ENCODE measurements at regions of chr12 and their contacts with region 1.

Region 1: DNA sequence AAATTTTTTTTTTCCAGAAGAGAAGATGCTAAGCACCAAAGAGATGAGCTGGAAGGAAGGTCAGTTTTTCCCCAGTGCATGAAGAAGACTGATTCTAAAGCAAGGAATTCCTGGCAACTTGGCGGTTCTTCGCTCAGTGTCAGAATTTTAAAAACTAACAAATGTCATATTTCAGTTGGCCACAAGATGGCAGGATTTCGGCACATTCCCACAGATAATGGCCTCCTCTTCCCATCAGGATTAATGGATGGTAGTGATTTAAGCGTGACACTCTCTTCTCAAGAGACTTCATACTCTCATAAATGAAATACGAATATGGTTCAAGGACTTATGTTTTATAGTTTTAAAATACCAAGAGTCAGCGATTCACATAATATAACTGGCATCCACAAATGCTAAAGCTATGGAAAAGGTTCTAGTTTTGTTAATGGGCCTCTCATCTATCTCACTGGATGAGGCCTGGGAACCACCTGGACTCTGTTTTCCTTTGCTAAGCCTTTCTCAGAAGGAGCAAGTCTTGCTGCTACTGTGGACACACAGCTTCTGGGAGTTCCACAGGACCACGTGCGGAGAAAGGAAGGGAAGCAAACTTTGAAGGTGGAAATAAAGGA is 46.1 kb upstream of the PTPRO start:
- DNase-seq: peak in 1 of 5 donors; percentile 14
- ATAC-seq: peak in 2 of 4 donors; percentile 49 to 61
- H3K4me3 ChIP-seq: no peak overlapping the region
- H3K27ac ChIP-seq: no peak overlapping the region
- H3K4me1 ChIP-seq: peaks cover 0 to 15% (median 11%) of the 10 kb centered on the region in 12 donors
- H3K27me3 ChIP-seq: peaks cover 0 to 8% (median 0%) of the 10 kb centered on the region in 9 donors
- CTCF ChIP-seq: peak; percentile 56 to 80 (median 72)
- POLR2A ChIP-seq: no peak

Region 2: DNA sequence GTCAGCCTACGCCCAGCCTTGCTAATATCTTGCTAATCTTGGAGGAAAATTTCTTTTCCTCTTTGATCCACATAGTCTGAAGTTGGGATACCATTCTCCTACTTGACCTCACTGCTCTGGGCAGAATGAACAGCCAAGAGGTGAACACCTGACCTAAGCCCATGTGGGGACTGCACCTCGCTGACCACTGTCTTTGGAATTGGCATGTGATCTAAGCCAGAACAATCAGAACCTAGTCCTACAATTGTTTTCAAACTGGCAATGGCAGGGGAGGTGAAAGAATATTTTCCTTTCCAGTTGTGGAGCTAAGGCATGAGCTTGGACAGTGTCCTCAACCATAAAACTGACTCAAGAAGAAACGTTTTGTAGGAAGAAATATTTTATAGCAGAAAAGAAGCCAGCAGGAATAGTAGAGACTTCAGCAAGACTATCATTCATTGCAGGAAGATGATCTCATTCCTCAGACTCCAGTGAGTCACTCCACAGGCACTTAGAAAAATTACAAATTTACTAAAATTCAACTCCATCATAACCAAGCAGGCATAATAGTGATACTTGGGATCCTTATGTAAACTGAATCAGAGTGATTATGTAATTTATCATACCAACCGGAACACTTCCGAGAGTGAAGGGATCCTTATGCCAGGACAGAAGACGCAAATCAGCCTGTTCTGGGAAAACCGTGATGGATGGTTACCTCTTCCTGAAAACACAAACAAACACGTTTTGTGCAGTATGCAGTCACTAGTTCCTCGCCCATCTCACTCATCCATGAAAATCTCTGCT is 60.8 kb after region 1 on chr12:
- intact Hi-C with region 1: no loop called
- DNase-seq: no peak
- ATAC-seq: no peak
- H3K4me3 ChIP-seq: no peak overlapping the region
- H3K27ac ChIP-seq: no peak overlapping the region
- H3K4me1 ChIP-seq: no peaks in the 10 kb centered on the region
- H3K27me3 ChIP-seq: peaks cover 0 to 12% (median 0%) of the 10 kb centered on the region in 9 donors
- CTCF ChIP-seq: no peak
- POLR2A ChIP-seq: no peak

Region 3: GRCh38 chr12:15522565-15523187 is 246.5 kb after region 1 on chr12:
- intact Hi-C with region 1: loop called (anchors 1 to 5 kb)
- DNase-seq: no peak
- ATAC-seq: peak in 1 of 4 donors; percentile 54
- H3K4me3 ChIP-seq: no peak overlapping the region
- H3K27ac ChIP-seq: no peak overlapping the region
- H3K4me1 ChIP-seq: peaks cover 0 to 6% (median 0%) of the 10 kb centered on the region in 12 donors
- H3K27me3 ChIP-seq: peaks cover 0 to 29% (median 13%) of the 10 kb centered on the region in 9 donors
- CTCF ChIP-seq: peak in 11 of 12 donors; percentile 27 to 65 (median 54)
- POLR2A ChIP-seq: no peak

Region 4: GRCh38 chr12:15584366-15585041 is 308.3 kb after region 1 on chr12:
- intact Hi-C with region 1: loop called in 9 of 10 experiments (anchors 1 to 10 kb)
- DNase-seq: no peak
- ATAC-seq: no peak
- H3K4me3 ChIP-seq: no peak overlapping the region
- H3K27ac ChIP-seq: no peak overlapping the region
- H3K4me1 ChIP-seq: no peaks in the 10 kb centered on the region
- H3K27me3 ChIP-seq: peaks cover 0 to 9% (median 0%) of the 10 kb centered on the region in 9 donors
- CTCF ChIP-seq: peak; percentile 37 to 78 (median 61)
- POLR2A ChIP-seq: no peak